ENCODE measurements at regions of chr12 and their contacts with region 1.

Region 1: DNA sequence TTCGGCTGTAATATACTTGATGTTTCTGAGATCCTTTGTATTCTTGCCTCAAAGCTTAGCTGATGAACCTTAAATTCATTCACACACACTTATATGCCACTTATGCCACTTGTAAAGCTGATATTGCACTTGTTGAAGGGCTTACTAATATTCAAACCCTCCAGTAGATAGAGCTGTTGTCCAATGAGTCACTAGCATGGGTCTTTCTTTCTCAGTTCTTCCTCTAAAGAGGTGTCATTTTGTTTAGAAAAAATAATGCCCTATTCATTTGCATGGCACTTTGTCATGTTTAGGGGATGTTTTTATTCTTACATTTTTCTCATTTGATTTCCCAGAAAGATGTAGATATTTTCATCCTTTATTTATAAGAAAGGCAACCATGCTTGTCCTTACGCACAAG is 56.4 kb downstream of the MON2 start:
- DNase-seq: peak; percentile 15
- ATAC-seq: peak; percentile 51; the same call in 1 of the 2 replicates
- H3K4me3 ChIP-seq: no peak overlapping the region
- H3K27ac ChIP-seq: no peak overlapping the region
- H3K4me1 ChIP-seq: no peaks in the 10 kb centered on the region
- H3K27me3 ChIP-seq: no peaks in the 10 kb centered on the region
- CTCF ChIP-seq: peak; percentile 18; the same call in 1 of the 2 replicates
- POLR2A ChIP-seq: no peak
- RAD21 ChIP-seq: peak; percentile 31

Region 2: GRCh38 chr12:62472472-62472871 is 50.5 kb before region 1 on chr12:
- CTCF ChIA-PET with region 1: no interaction called
- POLR2A ChIA-PET with region 1: no interaction called
- dilution Hi-C with region 1: no loop called
- in situ Hi-C with region 1: no loop called
- intact Hi-C with region 1: loop called (anchors 10 kb)
- DNase-seq: no peak
- ATAC-seq: no peak
- H3K4me3 ChIP-seq: no peak overlapping the region
- H3K27ac ChIP-seq: no peak overlapping the region
- H3K4me1 ChIP-seq: peaks cover 2% of the 10 kb centered on the region; the same call in 1 of the 2 replicates
- H3K27me3 ChIP-seq: no peaks in the 10 kb centered on the region
- CTCF ChIP-seq: no peak
- POLR2A ChIP-seq: no peak
- RAD21 ChIP-seq: no peak

Region 3: DNA sequence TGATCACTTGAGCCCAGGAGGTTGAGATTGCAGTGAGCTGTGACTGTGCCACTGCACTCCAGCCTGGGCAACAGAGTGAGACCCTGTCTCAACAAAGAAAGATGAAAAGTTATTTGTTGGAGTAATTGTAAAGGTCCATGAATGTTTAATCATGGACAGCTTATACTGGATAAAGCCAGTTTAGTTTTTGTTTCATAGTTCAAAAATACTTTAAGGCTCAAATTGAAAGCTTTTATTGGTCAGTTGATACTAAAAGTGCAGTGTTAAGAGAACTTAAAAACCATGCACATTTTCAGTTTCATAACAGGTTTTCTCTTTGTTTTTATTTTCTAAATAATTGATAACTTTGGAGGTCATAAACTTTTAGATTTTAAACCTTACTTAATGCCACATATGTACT is 52.1 kb after region 1 on chr12:
- CTCF ChIA-PET with region 1: no interaction called
- POLR2A ChIA-PET with region 1: no interaction called
- dilution Hi-C with region 1: no loop called
- in situ Hi-C with region 1: no loop called
- intact Hi-C with region 1: no loop called
- DNase-seq: no peak
- ATAC-seq: no peak
- H3K4me3 ChIP-seq: no peak overlapping the region
- H3K27ac ChIP-seq: no peak overlapping the region
- H3K4me1 ChIP-seq: no peaks in the 10 kb centered on the region
- H3K27me3 ChIP-seq: no peaks in the 10 kb centered on the region
- CTCF ChIP-seq: no peak
- POLR2A ChIP-seq: no peak
- RAD21 ChIP-seq: no peak

Region 4: GRCh38 chr12:62799126-62799736 is 276.2 kb after region 1 on chr12:
- CTCF ChIA-PET with region 1: interaction called, 3 read pairs
- POLR2A ChIA-PET with region 1: no interaction called
- dilution Hi-C with region 1: no loop called
- in situ Hi-C with region 1: no loop called
- intact Hi-C with region 1: loop called (anchors 5 kb)
- DNase-seq: peak; percentile 72
- ATAC-seq: peak; percentile 94
- H3K4me3 ChIP-seq: no peak overlapping the region
- H3K27ac ChIP-seq: no peak overlapping the region
- H3K4me1 ChIP-seq: no peaks in the 10 kb centered on the region
- H3K27me3 ChIP-seq: no peaks in the 10 kb centered on the region
- CTCF ChIP-seq: peak; percentile 93
- POLR2A ChIP-seq: no peak
- RAD21 ChIP-seq: peak; percentile 95

Measured in IMR-90 (cell line).